Heart right ventricle (tissue), 16 donors: ENCODE measurements at regions of chr1 and their contacts with region 1.

Region 1: GRCh38 chr1:31189696-31190674 is 49.7 kb downstream of the NKAIN1 start:
- DNase-seq: no peak
- ATAC-seq: no peak
- H3K4me3 ChIP-seq: no peak overlapping the region
- H3K27ac ChIP-seq: no peak overlapping the region
- H3K4me1 ChIP-seq: no peaks in the 10 kb centered on the region
- H3K27me3 ChIP-seq: peaks cover 0 to 18% (median 8%) of the 10 kb centered on the region in 7 donors
- CTCF ChIP-seq: no peak

Region 2: DNA sequence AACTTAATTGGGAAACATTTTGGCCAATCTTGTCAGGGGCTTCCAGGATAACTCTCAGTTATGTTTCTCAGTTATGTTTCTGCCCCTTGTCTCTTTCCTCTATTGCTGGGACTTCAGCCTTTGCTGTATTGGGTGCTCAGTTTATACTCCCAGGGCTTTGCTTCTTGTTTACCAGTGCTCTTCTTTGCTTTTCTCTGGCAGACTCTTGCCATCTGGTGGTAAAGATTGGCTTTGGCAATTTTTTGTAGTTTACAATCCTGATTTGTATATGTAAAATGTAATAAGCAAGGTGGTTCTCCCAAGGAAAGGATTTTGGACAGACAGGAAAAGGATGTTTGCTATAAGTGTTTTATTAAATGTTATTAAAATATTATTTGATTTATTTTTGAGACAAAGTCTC is 145.0 kb after region 1 on chr1:
- intact Hi-C with region 1: loop called in 4 of 10 experiments (anchors 2 to 10 kb)
- DNase-seq: no peak
- ATAC-seq: no peak
- H3K4me3 ChIP-seq: no peak overlapping the region
- H3K27ac ChIP-seq: no peak overlapping the region
- H3K4me1 ChIP-seq: no peaks in the 10 kb centered on the region
- H3K27me3 ChIP-seq: no peaks in the 10 kb centered on the region
- CTCF ChIP-seq: peak in 8 of 9 donors; percentile 14 to 61 (median 48)